ENCODE measurements at regions of chr2 and their contacts with region 1.

Region 1: DNA sequence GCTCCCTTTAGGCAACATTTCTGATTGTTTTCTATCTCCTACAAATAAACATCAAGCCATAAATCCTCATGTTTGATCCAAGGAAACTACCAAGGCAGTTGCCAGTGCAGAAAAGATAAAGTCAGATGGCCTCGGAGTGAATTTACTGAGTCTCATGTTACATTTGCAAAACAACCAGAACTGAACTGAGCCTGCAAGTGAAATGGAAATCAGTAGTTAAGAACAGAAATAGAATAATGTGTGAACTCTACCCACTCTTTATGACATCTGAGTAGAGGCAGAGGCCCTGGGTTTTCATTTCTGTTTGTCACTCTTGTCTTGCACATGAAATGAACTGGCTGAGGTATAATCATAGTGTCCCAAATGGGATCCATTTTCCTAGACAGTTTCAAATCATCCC is 20.4 kb upstream of the DAPL1 start:
- DNase-seq: no peak
- H3K4me3 ChIP-seq: no peak overlapping the region
- H3K4me3 Mint-ChIP-seq: no peak overlapping the region
- H3K27ac Mint-ChIP-seq: no peak overlapping the region
- H3K4me1 ChIP-seq: peaks cover 36% of the 10 kb centered on the region
- H3K4me1 Mint-ChIP-seq: peaks cover 15% of the 10 kb centered on the region
- H3K27me3 ChIP-seq: no peaks in the 10 kb centered on the region
- H3K27me3 Mint-ChIP-seq: no peaks in the 10 kb centered on the region
- CTCF ChIP-seq: no peak

Region 2: GRCh38 chr2:158894078-158894477 is 119.4 kb after region 1 on chr2:
- CTCF ChIA-PET with region 1: no interaction called
- POLR2A ChIA-PET with region 1: no interaction called
- intact Hi-C with region 1: loop called (anchors 5 kb)
- DNase-seq: peak in 1 of 2 experiments; percentile 42
- H3K4me3 ChIP-seq: no peak overlapping the region
- H3K4me3 Mint-ChIP-seq: peak overlapping the region; percentile 27
- H3K27ac Mint-ChIP-seq: peak overlapping the region; percentile 44
- H3K4me1 ChIP-seq: peaks cover 24% of the 10 kb centered on the region
- H3K4me1 Mint-ChIP-seq: peaks cover 20% of the 10 kb centered on the region
- H3K27me3 ChIP-seq: no peaks in the 10 kb centered on the region
- H3K27me3 Mint-ChIP-seq: no peaks in the 10 kb centered on the region
- CTCF ChIP-seq: no peak

Region 3: DNA sequence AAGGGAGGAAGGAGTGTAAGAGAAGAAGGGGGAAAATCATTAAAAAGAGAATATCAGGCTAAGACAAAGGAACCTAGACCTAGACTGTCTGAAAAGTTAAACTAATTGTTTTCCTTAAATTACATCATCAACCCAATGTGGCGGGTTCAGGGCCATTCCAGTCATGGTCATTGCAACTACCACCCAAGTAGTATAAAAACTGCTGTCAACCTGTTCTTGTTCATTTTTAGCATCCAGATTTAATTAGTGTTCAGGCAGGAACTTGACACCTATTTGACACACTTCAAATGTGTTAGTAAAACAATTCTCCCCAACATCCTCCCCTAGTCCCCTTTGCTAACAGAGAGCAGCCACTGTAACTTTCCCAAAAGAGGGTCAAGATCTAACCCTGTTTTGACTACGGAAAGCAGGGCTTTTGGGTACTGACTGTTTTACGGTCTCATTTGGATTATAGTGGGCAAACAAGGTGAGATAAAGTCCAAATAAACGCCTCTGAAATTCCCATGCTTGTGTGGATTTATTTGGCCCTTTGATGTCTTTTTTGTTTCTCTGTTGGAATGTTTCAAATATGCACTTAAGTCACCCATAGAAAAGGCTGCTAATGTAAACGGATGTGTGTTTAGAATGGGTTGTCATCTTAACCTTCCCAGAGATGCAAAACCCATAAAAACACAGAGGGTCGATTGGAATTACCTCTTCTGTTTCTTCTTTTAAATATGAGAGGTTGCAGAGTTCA is 174.5 kb after region 1 on chr2:
- CTCF ChIA-PET with region 1: no interaction called
- POLR2A ChIA-PET with region 1: no interaction called
- intact Hi-C with region 1: loop called (anchors 1 kb)
- DNase-seq: peak in 1 of 2 experiments; percentile 71
- H3K4me3 ChIP-seq: no peak overlapping the region
- H3K4me3 Mint-ChIP-seq: peak overlapping the region; percentile 28
- H3K27ac Mint-ChIP-seq: peak overlapping the region; percentile 13
- H3K4me1 ChIP-seq: peaks cover 34% of the 10 kb centered on the region
- H3K4me1 Mint-ChIP-seq: peaks cover 29% of the 10 kb centered on the region
- H3K27me3 ChIP-seq: no peaks in the 10 kb centered on the region
- H3K27me3 Mint-ChIP-seq: no peaks in the 10 kb centered on the region
- CTCF ChIP-seq: no peak

Region 4: GRCh38 chr2:159026170-159026569 is 251.5 kb after region 1 on chr2:
- CTCF ChIA-PET with region 1: no interaction called
- POLR2A ChIA-PET with region 1: no interaction called
- intact Hi-C with region 1: no loop called
- DNase-seq: no peak
- H3K4me3 ChIP-seq: no peak overlapping the region
- H3K4me3 Mint-ChIP-seq: no peak overlapping the region
- H3K27ac Mint-ChIP-seq: no peak overlapping the region
- H3K4me1 ChIP-seq: peaks cover 21% of the 10 kb centered on the region
- H3K4me1 Mint-ChIP-seq: peaks cover 30% of the 10 kb centered on the region
- H3K27me3 ChIP-seq: no peaks in the 10 kb centered on the region
- H3K27me3 Mint-ChIP-seq: no peaks in the 10 kb centered on the region
- CTCF ChIP-seq: no peak

Measured in Caco-2 (cell line).